ENCODE measurements at regions of chr5 and their contacts with region 1.

Region 1: DNA sequence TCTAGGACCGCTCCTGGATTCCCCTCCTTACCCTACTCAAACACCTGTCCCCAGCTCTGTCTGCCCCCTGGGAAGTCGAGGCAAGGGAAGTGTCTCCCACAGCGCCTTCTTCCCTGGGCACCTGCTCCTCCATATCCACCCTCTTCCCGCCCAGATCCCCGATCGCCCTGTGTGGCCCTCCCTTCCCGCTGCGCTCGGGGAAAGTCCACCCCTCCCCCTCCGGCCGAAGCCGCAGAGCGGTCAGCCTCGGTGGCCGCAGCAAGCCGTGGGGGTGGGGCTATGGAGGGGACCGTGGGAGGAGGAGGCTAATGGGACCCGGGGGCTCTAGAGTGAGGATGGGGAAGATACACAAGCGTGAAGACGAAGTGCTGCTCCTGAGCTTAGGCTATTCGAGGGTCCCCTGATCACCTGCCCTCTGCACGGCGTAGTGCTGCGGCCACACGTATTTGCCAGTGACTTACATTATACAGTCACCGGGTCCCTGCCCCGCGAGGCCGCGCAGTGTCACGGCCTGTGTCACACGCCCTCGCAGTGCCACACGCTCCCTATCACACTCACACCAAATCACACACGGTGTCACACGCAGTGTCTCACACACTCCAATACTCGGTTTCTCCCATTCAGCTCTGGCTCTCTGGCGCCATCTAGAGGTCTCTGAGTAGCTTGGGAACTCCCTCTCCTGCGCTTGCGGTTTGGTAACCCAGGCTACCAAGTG is 658 bp upstream of the PCDH1 start:
- DNase-seq: peak; percentile 80 to 97 (median 86)
- ATAC-seq: peak; percentile 85
- H3K4me3 ChIP-seq: peak overlapping the region; percentile 47
- H3K4me3 Mint-ChIP-seq: peak overlapping the region; percentile 81
- H3K27ac ChIP-seq: no peak overlapping the region
- H3K27ac Mint-ChIP-seq: no peak overlapping the region
- H3K4me1 ChIP-seq: peaks cover 44% of the 10 kb centered on the region
- H3K4me1 Mint-ChIP-seq: peaks cover 33% of the 10 kb centered on the region
- H3K27me3 ChIP-seq: peaks cover 84 to 85% of the 10 kb centered on the region in 2 experiments
- H3K27me3 Mint-ChIP-seq: peaks cover 85% of the 10 kb centered on the region
- CTCF ChIP-seq: peak; percentile 97

Region 2: GRCh38 chr5:141664732-141665461 is 214.0 kb before region 1 on chr5:
- CTCF ChIA-PET with region 1: interaction called, 12 read pairs
- POLR2A ChIA-PET with region 1: interaction called, 5 read pairs
- intact Hi-C with region 1: loop called in 1 of 2 experiments (anchors 1 kb)
- DNase-seq: peak; percentile 36 to 87 (median 70)
- ATAC-seq: peak; percentile 74
- H3K4me3 ChIP-seq: no peak overlapping the region
- H3K4me3 Mint-ChIP-seq: no peak overlapping the region
- H3K27ac ChIP-seq: no peak overlapping the region
- H3K27ac Mint-ChIP-seq: no peak overlapping the region
- H3K4me1 ChIP-seq: peaks cover 4% of the 10 kb centered on the region
- H3K4me1 Mint-ChIP-seq: no peaks in the 10 kb centered on the region
- H3K27me3 ChIP-seq: no peaks in the 10 kb centered on the region
- H3K27me3 Mint-ChIP-seq: no peaks in the 10 kb centered on the region
- CTCF ChIP-seq: peak; percentile 96

Region 3: GRCh38 chr5:141681695-141682641 is 196.9 kb before region 1 on chr5 and contains the start of gene ARAP3:
- CTCF ChIA-PET with region 1: interaction called, 12 read pairs
- POLR2A ChIA-PET with region 1: interaction called, 4 read pairs
- intact Hi-C with region 1: no loop called
- DNase-seq: peak in 10 of 14 experiments; percentile 22 to 66 (median 38)
- ATAC-seq: peak; percentile 66
- H3K4me3 ChIP-seq: peak within 1 kb of the TSS; percentile 51
- H3K4me3 Mint-ChIP-seq: peak within 1 kb of the TSS; percentile 62
- H3K27ac ChIP-seq: no peak within 1 kb of the TSS
- H3K27ac Mint-ChIP-seq: no peak within 1 kb of the TSS
- H3K4me1 ChIP-seq: peaks cover 37% of the 10 kb centered on the region
- H3K4me1 Mint-ChIP-seq: peaks cover 29% of the 10 kb centered on the region
- H3K27me3 ChIP-seq: no peaks in the 10 kb centered on the region
- H3K27me3 Mint-ChIP-seq: no peaks in the 10 kb centered on the region
- CTCF ChIP-seq: no peak
- total RNA-seq, gene ARAP3: 0.30 to 0.31 TPM

Region 4: DNA sequence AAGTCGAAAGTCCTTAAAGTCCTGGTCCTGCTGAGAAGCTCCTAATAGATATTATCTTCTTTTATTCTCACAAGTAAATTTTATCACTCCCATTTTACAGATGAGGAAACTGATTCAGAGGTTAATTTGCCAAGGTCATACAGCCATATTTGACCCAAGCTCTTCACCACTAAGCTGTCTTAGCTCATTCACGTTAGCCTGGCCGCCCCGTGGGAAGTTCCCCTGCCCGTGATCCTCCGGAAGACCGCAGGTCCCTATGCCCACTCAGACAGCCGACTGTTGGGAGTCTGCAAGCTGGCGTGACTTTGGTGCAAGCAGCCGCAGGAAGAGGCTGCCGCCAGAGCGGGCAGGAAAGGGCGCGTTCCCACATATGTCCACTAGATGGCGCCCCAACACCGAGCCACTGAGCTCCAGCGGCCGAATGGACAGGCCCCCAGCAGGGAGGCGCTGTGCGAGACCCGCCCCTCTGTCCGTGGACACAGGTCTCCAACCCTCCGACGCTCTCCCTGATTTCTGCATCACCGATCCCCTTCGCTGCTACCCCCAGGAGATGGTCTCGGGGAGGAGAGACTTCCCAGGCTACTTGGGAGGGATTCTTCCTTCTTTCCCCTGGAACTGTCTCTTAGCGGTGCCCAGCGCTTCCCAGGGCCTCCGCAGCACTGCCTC is 186.9 kb before region 1 on chr5:
- CTCF ChIA-PET with region 1: interaction called, 88 read pairs
- POLR2A ChIA-PET with region 1: interaction called, 43 read pairs
- intact Hi-C with region 1: loop called (anchors 1 to 2 kb)
- DNase-seq: peak; percentile 66 to 92 (median 84)
- ATAC-seq: peak; percentile 68
- H3K4me3 ChIP-seq: peak overlapping the region; percentile 35
- H3K4me3 Mint-ChIP-seq: peak overlapping the region; percentile 57
- H3K27ac ChIP-seq: no peak overlapping the region
- H3K27ac Mint-ChIP-seq: no peak overlapping the region
- H3K4me1 ChIP-seq: peaks cover 20% of the 10 kb centered on the region
- H3K4me1 Mint-ChIP-seq: peaks cover 23% of the 10 kb centered on the region
- H3K27me3 ChIP-seq: no peaks in the 10 kb centered on the region
- H3K27me3 Mint-ChIP-seq: peaks cover 35% of the 10 kb centered on the region
- CTCF ChIP-seq: peak; percentile 98

Region 5: GRCh38 chr5:141701360-141702119 is 177.3 kb before region 1 on chr5:
- CTCF ChIA-PET with region 1: interaction called, 23 read pairs
- POLR2A ChIA-PET with region 1: interaction called, 15 read pairs
- intact Hi-C with region 1: loop called (anchors 1 kb)
- DNase-seq: peak in 1 of 14 experiments; percentile 15
- ATAC-seq: peak; percentile 35
- H3K4me3 ChIP-seq: peak overlapping the region; percentile 73
- H3K4me3 Mint-ChIP-seq: no peak overlapping the region
- H3K27ac ChIP-seq: no peak overlapping the region
- H3K27ac Mint-ChIP-seq: no peak overlapping the region
- H3K4me1 ChIP-seq: peaks cover 23% of the 10 kb centered on the region
- H3K4me1 Mint-ChIP-seq: peaks cover 19% of the 10 kb centered on the region
- H3K27me3 ChIP-seq: peaks cover 32 to 33% of the 10 kb centered on the region in 2 experiments
- H3K27me3 Mint-ChIP-seq: peaks cover 51% of the 10 kb centered on the region
- CTCF ChIP-seq: no peak

Region 6: DNA sequence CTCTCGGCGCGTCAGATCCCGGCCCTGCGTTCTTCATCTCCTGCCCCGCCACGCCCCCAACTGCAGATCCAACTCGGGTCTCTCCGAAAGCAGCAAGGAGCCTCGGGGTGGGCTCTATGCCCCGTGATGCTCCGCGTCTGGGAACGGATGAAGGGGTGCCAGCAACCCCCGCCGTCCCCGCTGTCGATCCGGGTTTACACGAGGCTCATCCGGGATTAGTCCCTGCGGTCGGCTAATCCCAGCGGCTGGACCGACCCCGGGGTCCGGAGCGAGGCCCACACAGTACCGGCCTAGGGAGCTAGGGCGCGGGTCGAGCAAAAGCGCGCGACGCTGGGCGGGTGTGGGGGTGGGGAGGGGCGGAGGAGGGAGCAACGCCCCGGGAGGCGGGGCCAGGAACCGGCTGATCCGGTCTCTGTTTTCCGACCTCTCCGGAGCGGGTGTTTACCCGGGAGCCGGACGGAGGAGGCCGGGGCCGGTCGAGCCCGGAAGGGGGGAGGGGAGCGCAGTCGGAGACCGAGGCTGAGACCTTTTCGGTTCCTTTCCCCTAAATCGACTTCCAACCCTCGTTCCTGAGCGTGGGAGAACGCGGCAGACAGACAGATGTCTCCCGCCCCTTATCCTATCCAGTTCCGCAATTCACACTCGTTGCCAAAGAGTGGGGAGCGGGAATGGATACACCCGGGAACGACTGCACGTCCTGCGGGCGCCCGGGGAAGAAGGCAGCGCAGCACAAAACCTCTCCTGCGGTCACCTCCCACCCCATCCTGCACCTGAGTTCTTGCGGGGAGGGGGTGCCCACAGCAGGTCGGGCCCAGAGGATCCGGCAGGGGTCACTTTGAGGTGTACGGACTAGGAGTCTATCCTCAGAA is 29.3 kb before region 1 on chr5:
- CTCF ChIA-PET with region 1: interaction called, 9 read pairs
- POLR2A ChIA-PET with region 1: interaction called, 15 read pairs
- intact Hi-C with region 1: loop called in 1 of 2 experiments (anchors 1 kb)
- DNase-seq: peak; percentile 51 to 86 (median 69)
- ATAC-seq: peak; percentile 77
- H3K4me3 ChIP-seq: peak overlapping the region; percentile 81
- H3K4me3 Mint-ChIP-seq: peak overlapping the region; percentile 90
- H3K27ac ChIP-seq: peak overlapping the region; percentile 64 to 71
- H3K27ac Mint-ChIP-seq: peak overlapping the region; percentile 80
- H3K4me1 ChIP-seq: peaks cover 14% of the 10 kb centered on the region
- H3K4me1 Mint-ChIP-seq: peaks cover 10% of the 10 kb centered on the region
- H3K27me3 ChIP-seq: no peaks in the 10 kb centered on the region
- H3K27me3 Mint-ChIP-seq: no peaks in the 10 kb centered on the region
- CTCF ChIP-seq: no peak

Region 7: GRCh38 chr5:141923448-141924352 is 44.8 kb after region 1 on chr5 and contains the start of gene DELE1:
- CTCF ChIA-PET with region 1: interaction called, 3 read pairs
- POLR2A ChIA-PET with region 1: interaction called, 19 read pairs
- intact Hi-C with region 1: no loop called
- DNase-seq: peak; percentile 82 to 95 (median 87)
- ATAC-seq: peak; percentile 94
- H3K4me3 ChIP-seq: peak within 1 kb of the TSS; percentile 75
- H3K4me3 Mint-ChIP-seq: peak within 1 kb of the TSS; percentile 96
- H3K27ac ChIP-seq: peak within 1 kb of the TSS; percentile 94 to 96
- H3K27ac Mint-ChIP-seq: peak within 1 kb of the TSS; percentile 99
- H3K4me1 ChIP-seq: peaks cover 30% of the 10 kb centered on the region
- H3K4me1 Mint-ChIP-seq: peaks cover 45% of the 10 kb centered on the region
- H3K27me3 ChIP-seq: no peaks in the 10 kb centered on the region
- H3K27me3 Mint-ChIP-seq: no peaks in the 10 kb centered on the region
- CTCF ChIP-seq: no peak
- total RNA-seq, gene DELE1: 60.0 to 61.1 TPM

Region 8: DNA sequence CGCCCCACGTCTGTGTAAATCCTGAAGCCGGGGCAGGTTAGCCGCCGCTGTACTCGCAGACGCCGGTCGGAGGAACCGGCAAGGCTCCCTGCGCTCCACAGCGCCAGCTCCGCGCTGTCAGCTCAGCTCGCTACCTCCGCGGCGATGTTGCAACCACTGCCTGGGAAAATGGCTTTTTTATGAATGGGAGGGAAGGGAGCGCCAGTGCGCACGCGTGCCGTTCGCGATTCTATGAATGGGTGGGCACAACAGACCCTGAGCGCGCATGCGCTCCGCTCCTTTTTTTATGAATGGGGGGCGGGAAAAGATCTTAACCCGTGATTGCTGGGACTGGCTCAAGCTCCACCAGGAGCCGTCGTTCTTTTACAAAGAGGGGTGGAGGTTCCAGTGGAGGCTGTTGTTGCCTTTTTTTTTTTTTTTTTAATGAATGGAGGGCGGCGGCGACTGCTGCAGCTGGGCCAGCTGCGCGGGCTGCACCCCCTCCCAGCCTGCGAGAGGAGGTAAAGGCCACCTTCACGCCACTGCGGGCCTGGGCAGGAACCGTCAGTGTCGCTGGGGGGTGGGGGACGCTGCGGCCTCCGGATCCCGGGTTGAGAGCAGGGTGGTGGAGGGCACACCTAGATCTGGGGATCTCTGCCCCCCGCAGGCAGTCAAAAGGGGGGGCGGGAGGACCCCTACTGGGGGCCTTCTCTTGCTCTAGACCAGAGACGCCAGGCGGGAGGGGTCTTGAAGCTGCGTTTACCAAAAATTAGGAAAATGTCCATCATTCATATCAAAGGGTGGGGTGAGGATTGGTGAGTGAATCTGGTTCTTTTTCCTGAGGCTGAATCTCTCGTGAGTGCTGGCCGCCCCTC is 446.2 kb after region 1 on chr5 and contains the start of gene SPRY4:
- CTCF ChIA-PET with region 1: no interaction called
- POLR2A ChIA-PET with region 1: no interaction called
- intact Hi-C with region 1: no loop called
- DNase-seq: peak; percentile 51 to 86 (median 74)
- ATAC-seq: peak; percentile 81
- H3K4me3 ChIP-seq: peak within 1 kb of the TSS; percentile 61
- H3K4me3 Mint-ChIP-seq: peak within 1 kb of the TSS; percentile 87
- H3K27ac ChIP-seq: no peak within 1 kb of the TSS
- H3K27ac Mint-ChIP-seq: no peak within 1 kb of the TSS
- H3K4me1 ChIP-seq: peaks cover 33% of the 10 kb centered on the region
- H3K4me1 Mint-ChIP-seq: peaks cover 49% of the 10 kb centered on the region
- H3K27me3 ChIP-seq: peaks cover 54 to 58% of the 10 kb centered on the region in 2 experiments
- H3K27me3 Mint-ChIP-seq: peaks cover 81% of the 10 kb centered on the region
- CTCF ChIP-seq: no peak
- total RNA-seq, gene SPRY4: 0.16 to 0.34 TPM

Measured in CD4-positive, alpha-beta T cell (primary cell).